ENCODE measurements at regions of chr10 and their contacts with region 1.

Region 1: GRCh38 chr10:80444646-80445319 is 9.3 kb upstream of the TSPAN14 start:
- DNase-seq: peak; percentile 57
- H3K4me3 ChIP-seq: no peak overlapping the region
- H3K27ac ChIP-seq: no peak overlapping the region
- H3K4me1 ChIP-seq: peaks cover 3% of the 10 kb centered on the region
- H3K27me3 ChIP-seq: no peaks in the 10 kb centered on the region
- CTCF ChIP-seq: peak; percentile 80 to 92

Region 2: DNA sequence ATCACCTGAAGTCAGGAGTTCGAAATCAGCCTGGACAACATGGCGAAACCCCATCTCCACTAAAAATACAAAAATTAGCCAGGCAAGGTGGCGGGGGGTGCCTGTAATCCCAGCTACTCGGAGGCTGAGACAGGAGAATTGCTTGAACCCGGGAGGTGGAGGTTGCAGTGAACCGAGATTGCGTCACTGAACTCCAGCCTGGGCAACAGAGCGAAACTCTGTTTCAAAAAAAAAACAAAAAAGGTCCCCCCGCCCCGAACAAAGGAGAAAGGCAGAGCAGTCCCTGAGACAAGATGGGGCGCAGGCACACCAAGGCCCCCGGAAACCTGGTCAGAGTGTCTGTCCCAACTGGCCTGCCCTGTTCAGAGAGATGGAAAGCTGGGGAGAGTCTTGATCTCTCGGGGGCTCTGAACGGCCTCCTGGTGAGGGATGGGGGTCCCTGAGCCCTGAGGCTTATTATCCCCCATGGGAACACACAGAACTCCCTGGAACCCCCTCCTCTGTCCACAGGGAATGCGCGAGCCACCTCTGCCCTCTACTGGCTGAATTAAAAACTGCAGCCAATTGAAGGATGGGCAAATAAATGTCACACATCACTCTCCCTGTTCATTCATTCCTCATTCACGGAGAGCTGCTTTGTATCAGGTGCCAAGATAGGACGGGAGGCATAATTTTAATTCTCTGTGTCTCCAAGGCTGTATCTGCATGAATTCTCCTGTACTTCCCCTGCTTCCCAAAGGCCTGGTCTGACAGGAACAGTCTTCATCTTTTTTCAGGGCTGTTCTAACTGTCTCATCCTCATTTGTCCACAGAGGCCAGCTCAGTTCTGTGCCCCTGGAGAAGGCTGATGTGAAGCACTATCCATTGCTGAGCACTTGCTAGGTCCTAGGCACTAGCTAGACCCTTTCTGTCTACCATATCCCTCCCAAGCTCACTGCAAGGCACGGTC is 184.2 kb before region 1 on chr10:
- CTCF ChIA-PET with region 1: no interaction called
- dilution Hi-C with region 1: no loop called
- in situ Hi-C with region 1: no loop called
- intact Hi-C with region 1: loop called (anchors 5 kb)
- DNase-seq: peak; percentile 20
- H3K4me3 ChIP-seq: no peak overlapping the region
- H3K27ac ChIP-seq: no peak overlapping the region
- H3K4me1 ChIP-seq: no peaks in the 10 kb centered on the region
- H3K27me3 ChIP-seq: no peaks in the 10 kb centered on the region
- CTCF ChIP-seq: peak; percentile 88 to 89

Region 3: DNA sequence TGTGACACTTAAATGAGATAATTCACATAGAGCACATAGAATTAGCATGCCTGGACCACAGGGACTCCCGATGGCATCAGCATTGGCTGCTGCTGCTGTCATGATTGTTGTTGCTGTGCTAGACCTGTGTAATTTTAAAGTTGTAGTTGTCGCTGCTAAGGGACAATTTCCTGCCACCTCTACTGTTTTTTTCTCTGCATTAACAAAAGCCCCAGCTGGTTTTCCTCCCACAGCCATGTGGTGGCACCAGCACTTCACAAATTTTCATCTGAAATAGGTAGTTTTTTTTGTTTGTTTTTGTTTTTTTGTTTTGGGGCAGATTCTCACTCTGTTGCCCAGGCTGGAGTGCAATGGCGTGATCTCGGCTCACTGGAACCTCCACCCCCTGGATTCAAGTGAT is 61.8 kb before region 1 on chr10:
- CTCF ChIA-PET with region 1: interaction called, 3 read pairs
- dilution Hi-C with region 1: no loop called
- in situ Hi-C with region 1: loop called (anchors 5 to 10 kb)
- intact Hi-C with region 1: loop called (anchors 1 kb)
- DNase-seq: peak; percentile 27
- H3K4me3 ChIP-seq: no peak overlapping the region
- H3K27ac ChIP-seq: no peak overlapping the region
- H3K4me1 ChIP-seq: no peaks in the 10 kb centered on the region
- H3K27me3 ChIP-seq: no peaks in the 10 kb centered on the region
- CTCF ChIP-seq: peak; percentile 66 to 69

Region 4: DNA sequence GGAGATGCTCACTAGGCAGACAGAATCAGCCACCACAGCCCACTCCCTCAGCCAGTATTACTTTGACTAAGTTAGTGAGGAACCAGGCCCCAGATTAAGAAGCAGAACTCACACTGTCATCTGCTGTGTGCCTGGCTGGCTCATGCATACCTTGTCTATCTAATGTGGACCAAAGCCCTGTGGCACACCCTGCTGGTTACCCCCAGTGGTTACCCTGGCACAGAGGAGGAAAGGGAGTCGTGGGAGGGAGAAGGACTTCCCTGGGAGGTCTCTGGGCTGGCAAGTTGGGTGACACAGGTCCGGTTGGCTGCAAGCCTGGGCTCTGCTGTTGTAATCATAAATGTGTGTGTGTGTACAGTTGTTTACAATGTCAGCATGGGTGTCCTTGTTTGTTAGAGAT is 85.5 kb after region 1 on chr10:
- CTCF ChIA-PET with region 1: no interaction called
- dilution Hi-C with region 1: no loop called
- in situ Hi-C with region 1: no loop called
- intact Hi-C with region 1: loop called (anchors 1 kb)
- DNase-seq: no peak
- H3K4me3 ChIP-seq: no peak overlapping the region
- H3K27ac ChIP-seq: no peak overlapping the region
- H3K4me1 ChIP-seq: no peaks in the 10 kb centered on the region
- H3K27me3 ChIP-seq: no peaks in the 10 kb centered on the region
- CTCF ChIP-seq: peak; percentile 31 to 68

Region 5: DNA sequence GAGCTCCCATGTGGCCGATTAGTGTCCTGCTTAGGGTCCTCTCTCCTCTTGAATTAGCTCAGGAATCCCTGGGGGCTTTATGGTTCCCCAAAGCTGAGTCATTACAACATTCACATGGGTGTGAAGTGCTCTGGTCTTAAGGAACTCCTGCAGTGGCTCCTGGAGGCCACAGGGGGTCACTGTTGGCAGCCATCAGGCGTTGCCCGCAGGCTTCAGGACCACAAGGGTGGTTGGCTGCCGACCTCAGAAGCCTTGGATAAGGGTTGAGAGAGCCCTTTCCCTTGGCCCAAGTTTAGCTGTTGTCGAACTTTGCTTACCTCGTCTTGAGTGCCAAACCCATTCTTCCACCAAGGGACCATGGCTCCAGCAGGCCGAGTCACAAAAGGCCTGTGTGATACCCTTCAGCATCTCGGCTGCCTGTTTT is 154.7 kb after region 1 on chr10:
- CTCF ChIA-PET with region 1: no interaction called
- dilution Hi-C with region 1: no loop called
- in situ Hi-C with region 1: no loop called
- intact Hi-C with region 1: loop called (anchors 2 kb)
- DNase-seq: peak; percentile 25
- H3K4me3 ChIP-seq: no peak overlapping the region
- H3K27ac ChIP-seq: no peak overlapping the region
- H3K4me1 ChIP-seq: no peaks in the 10 kb centered on the region
- H3K27me3 ChIP-seq: no peaks in the 10 kb centered on the region
- CTCF ChIP-seq: peak; percentile 91 to 93

Measured in mammary epithelial cell (primary cell).